ENCODE measurements at regions of chr6 and their contacts with region 1.

Region 1: GRCh38 chr6:157314705-157315321 is 8.5 kb downstream of the TMEM242 start:
- DNase-seq: peak; percentile 32
- ATAC-seq: peak; percentile 93
- H3K4me3 Mint-ChIP-seq: no peak overlapping the region
- H3K27ac Mint-ChIP-seq: no peak overlapping the region
- H3K4me1 Mint-ChIP-seq: peaks cover 6% of the 10 kb centered on the region
- H3K27me3 Mint-ChIP-seq: no peaks in the 10 kb centered on the region
- CTCF ChIP-seq: peak; percentile 90

Region 2: GRCh38 chr6:157597446-157598312 is 282.9 kb after region 1 on chr6:
- CTCF ChIA-PET with region 1: interaction called, 7 read pairs
- POLR2A ChIA-PET with region 1: no interaction called
- intact Hi-C with region 1: loop called (anchors 10 kb)
- DNase-seq: peak; percentile 64
- ATAC-seq: peak; percentile 60
- H3K4me3 Mint-ChIP-seq: no peak overlapping the region
- H3K27ac Mint-ChIP-seq: no peak overlapping the region
- H3K4me1 Mint-ChIP-seq: no peaks in the 10 kb centered on the region
- H3K27me3 Mint-ChIP-seq: no peaks in the 10 kb centered on the region
- CTCF ChIP-seq: peak; percentile 51